Gastrocnemius medialis (tissue), 4 donors: ENCODE measurements at regions of chr15 and their contacts with region 1.

Region 1: DNA sequence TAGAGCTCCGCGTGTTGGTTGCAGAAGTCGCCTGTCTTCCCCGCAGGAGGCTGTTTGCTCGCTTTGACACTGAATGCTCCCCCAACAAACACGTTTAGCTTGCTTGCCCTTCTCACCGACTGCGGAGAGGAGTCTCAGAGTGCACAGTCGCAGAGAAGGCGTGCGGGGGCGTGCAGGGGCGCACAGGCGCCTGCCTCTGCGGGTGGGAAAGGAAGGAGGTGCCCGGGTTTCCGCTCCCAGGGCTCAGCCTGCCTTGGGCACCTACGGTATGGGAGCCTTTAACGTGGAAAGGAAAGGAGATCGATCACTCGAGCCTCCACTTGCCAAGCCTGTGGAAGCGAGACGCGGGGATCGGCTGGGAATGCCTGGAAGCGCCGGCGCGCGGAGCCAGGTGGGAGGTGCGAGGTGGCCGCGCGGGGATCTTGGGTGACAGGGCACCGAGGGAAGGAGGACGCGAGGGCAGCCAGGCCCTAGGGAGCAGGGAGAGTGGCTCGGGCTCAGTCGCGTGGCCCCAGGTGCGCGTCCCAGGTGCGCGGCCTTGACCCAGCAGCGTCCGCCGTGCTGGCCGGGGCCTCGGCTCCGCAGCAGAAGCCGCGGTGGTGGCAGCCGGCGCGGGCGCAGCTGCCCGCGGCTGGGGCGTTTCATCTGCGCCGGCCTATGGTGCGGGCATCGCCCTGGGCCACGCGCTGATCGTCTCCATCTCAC is at the start of gene FAN1:
- DNase-seq: peak; percentile 81 to 89
- ATAC-seq: peak; percentile 95 to 98
- H3K4me3 ChIP-seq: peak within 1 kb of the TSS; percentile 63 to 98 (median 85)
- H3K27ac ChIP-seq: peak within 1 kb of the TSS; percentile 79 to 91 (median 87)
- H3K4me1 ChIP-seq: peaks cover 26 to 31% of the 10 kb centered on the region in 2 donors
- H3K27me3 ChIP-seq: no peaks in the 10 kb centered on the region
- CTCF ChIP-seq: no peak
- POLR2A ChIP-seq: peak; percentile 71 to 78
- total RNA-seq, gene FAN1: 20.0 to 27.5 (median 25.3) TPM

Region 2: GRCh38 chr15:30953731-30954378 is 50.2 kb after region 1 on chr15:
- in situ Hi-C with region 1: no loop called
- intact Hi-C with region 1: no loop called
- DNase-seq: peak; percentile 30 to 80
- ATAC-seq: peak; percentile 66 to 73
- H3K4me3 ChIP-seq: no peak overlapping the region
- H3K27ac ChIP-seq: peak overlapping the region; percentile 83 to 95 (median 84)
- H3K4me1 ChIP-seq: peaks cover 14 to 38% of the 10 kb centered on the region in 2 donors
- H3K27me3 ChIP-seq: no peaks in the 10 kb centered on the region
- CTCF ChIP-seq: no peak
- POLR2A ChIP-seq: peak in 1 of 2 donors; percentile 24

Region 3: DNA sequence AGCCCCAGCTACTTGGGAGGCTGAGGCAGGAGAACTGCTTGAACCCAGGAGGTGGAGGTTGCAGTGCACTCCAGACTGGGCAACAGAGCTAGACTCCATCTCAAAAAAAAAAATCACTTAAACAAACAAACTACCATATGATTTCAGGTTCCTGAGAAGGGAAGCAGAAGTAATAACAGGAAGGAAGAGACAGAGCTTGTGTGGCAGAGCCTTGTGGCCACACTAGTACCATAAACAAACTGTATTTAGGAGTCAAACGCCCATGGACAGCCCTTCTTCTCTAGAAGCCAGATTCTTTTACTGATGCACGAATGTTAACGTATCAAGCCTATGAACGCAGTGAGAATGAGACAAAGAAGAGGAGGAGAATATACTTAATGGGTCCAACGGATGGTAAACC is 75.8 kb after region 1 on chr15:
- in situ Hi-C with region 1: loop called in 2 of 4 experiments (anchors 10 kb)
- intact Hi-C with region 1: no loop called
- DNase-seq: no peak
- ATAC-seq: no peak
- H3K4me3 ChIP-seq: no peak overlapping the region
- H3K27ac ChIP-seq: no peak overlapping the region
- H3K4me1 ChIP-seq: peaks cover 65 to 68% of the 10 kb centered on the region in 2 donors
- H3K27me3 ChIP-seq: no peaks in the 10 kb centered on the region
- CTCF ChIP-seq: no peak
- POLR2A ChIP-seq: no peak

Region 4: DNA sequence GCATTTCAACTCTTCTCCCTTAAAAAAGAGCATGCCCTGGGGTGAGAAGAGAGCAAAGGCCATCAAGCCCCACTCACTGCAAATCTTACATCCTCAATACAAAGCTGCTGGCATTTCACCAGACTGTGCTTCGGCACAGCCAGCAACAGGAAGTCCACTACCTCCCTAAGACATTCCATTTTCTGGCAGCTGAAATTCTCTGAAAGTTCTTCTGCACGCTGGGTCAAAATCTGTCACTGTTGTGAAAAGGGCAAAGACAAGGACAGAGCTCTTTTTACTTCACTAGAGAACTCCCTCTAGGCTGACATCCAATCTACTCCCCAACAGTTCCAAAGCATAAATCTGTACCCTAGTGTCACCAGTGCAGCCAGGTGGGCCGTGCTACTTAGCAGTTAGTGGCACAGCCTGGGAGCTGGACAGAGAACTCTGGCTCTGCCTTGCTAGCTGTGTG is 81.5 kb after region 1 on chr15:
- in situ Hi-C with region 1: loop called in 1 of 4 experiments (anchors 10 kb)
- intact Hi-C with region 1: loop called (anchors 2 kb)
- DNase-seq: peak; percentile 12 to 58
- ATAC-seq: peak in 1 of 2 donors; percentile 77
- H3K4me3 ChIP-seq: no peak overlapping the region
- H3K27ac ChIP-seq: peak overlapping the region; percentile 46 to 96 (median 80)
- H3K4me1 ChIP-seq: peaks cover 82 to 83% of the 10 kb centered on the region in 2 donors
- H3K27me3 ChIP-seq: no peaks in the 10 kb centered on the region
- CTCF ChIP-seq: no peak
- POLR2A ChIP-seq: no peak

Region 5: DNA sequence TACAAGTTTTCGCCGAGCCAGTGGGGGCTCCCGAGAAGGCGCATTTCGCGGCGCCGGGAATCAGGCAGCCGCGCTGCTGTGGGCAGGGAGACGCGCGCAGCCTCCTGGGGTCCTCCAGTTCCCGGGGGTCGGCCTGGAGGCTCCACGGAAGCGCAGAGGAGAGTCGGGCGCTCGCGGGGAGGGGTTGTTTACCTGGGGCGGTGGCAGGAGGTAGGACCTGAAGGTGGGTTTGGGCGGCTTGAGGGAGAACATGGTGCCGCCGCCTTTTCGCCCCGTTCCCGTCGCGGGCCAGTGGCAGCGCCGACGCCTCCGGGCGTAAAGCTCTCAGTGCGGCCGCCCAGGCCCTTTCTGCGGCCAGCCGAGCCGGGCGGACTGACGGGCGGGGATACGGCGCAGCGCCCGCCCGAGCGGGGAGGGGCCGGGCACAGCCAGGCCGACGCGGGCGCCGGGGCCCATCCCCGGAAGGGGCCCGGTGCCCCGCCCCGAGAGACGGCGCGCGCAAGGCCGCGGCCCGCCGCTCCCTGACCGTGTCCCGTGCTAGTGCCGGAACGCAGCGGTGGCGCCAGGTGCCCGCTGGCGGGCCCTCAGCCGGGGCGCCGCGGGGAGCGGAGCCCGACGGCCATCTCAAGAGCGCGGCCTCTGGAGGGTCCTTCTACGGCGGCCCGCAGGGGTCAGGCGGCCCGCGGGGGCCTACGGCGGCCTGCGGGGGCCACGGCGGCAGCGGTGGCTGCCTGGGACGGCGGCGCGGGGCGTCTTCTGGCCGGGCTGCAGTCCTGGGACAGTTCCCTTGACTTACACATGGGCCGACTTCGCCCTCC is 87.8 kb after region 1 on chr15 and contains the start of gene MTMR10:
- in situ Hi-C with region 1: loop called in 1 of 4 experiments (anchors 10 kb)
- intact Hi-C with region 1: loop called (anchors 2 kb)
- DNase-seq: peak; percentile 41 to 76
- ATAC-seq: peak; percentile 84 to 87
- H3K4me3 ChIP-seq: peak within 1 kb of the TSS; percentile 83 to 100 (median 92)
- H3K27ac ChIP-seq: peak within 1 kb of the TSS; percentile 94 to 99 (median 96)
- H3K4me1 ChIP-seq: peaks cover 45 to 52% of the 10 kb centered on the region in 2 donors
- H3K27me3 ChIP-seq: no peaks in the 10 kb centered on the region
- CTCF ChIP-seq: peak in 3 of 5 experiments; percentile 24 to 65 (median 56)
- POLR2A ChIP-seq: peak; percentile 95 to 96
- total RNA-seq, gene MTMR10: 36.6 to 63.4 (median 40.4) TPM

Region 6: GRCh38 chr15:31128919-31129768 is 225.5 kb after region 1 on chr15:
- in situ Hi-C with region 1: loop called in 3 of 4 experiments (anchors 25 kb)
- intact Hi-C with region 1: loop called (anchors 5 kb)
- DNase-seq: peak; percentile 38 to 54
- ATAC-seq: peak; percentile 92 to 94
- H3K4me3 ChIP-seq: peak overlapping the region in 3 of 4 donors; percentile 2 to 17 (median 3)
- H3K27ac ChIP-seq: no peak overlapping the region
- H3K4me1 ChIP-seq: peaks cover 8 to 9% of the 10 kb centered on the region in 2 donors
- H3K27me3 ChIP-seq: no peaks in the 10 kb centered on the region
- CTCF ChIP-seq: peak; percentile 79 to 98 (median 86)
- POLR2A ChIP-seq: no peak

Region 7: GRCh38 chr15:31870328-31871165 is 966.9 kb after region 1 on chr15:
- in situ Hi-C with region 1: no loop called
- intact Hi-C with region 1: loop called (anchors 10 kb)
- DNase-seq: peak; percentile 74 to 75
- ATAC-seq: peak; percentile 88 to 90
- H3K4me3 ChIP-seq: peak within 1 kb of the TSS; percentile 64 to 85 (median 70)
- H3K27ac ChIP-seq: peak within 1 kb of the TSS; percentile 69 to 87 (median 84)
- H3K4me1 ChIP-seq: peaks cover 6% of the 10 kb centered on the region in 2 donors
- H3K27me3 ChIP-seq: no peaks in the 10 kb centered on the region
- CTCF ChIP-seq: peak in 1 of 5 experiments; percentile 9
- POLR2A ChIP-seq: peak; percentile 42 to 49